K562 (cell line): ENCODE measurements at regions of chr12 and their contacts with region 1.

Region 1: DNA sequence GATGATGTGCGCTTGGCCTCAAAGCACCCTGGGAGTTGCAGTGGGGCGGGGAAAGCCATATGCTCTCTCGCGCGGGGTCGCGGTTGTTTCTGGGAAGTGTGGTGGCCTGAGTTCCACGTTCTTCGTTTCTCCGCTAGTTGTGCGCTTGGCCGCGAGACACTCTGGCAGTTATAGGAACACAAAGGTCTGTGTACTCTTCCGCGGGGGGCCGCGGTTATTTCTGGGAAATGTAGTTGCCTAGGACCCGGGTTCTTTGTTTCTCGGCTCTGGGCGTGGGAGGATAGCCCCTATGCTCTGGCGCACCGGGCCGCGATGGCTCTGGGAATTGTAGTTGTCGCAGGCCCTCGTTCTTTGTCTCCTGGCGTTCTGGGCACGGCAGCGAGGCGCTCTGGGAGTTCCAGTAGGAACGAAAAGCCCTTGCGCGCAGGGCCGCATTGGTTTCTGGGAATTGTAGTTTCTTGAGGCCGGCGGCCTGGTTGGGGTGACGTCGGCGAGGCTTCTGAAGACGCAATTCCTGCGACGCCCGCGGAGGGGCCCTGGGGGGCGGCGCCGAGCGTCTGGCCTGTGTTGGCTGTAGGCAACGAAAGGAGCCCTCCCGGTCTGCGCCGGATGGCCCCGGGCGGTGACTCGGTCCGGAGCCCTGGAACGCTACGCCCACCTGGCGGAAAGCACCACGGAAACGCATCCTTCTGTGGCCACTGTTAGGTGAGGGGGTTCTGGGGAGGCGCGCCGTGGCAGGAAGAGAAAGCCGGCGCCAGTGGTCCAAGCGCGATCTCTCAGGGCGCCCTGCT is at the start of gene ZNF140:
- DNase-seq: peak; percentile 86 to 96 (median 86)
- ATAC-seq: peak; percentile 90
- H3K4me3 ChIP-seq: peak within 1 kb of the TSS; percentile 91
- H3K27ac ChIP-seq: peak within 1 kb of the TSS; percentile 99
- H3K4me1 ChIP-seq: peaks cover 5 to 10% of the 10 kb centered on the region in 2 experiments; a peak in 3 of 5 replicates
- H3K27me3 ChIP-seq: no peaks in the 10 kb centered on the region
- CTCF ChIP-seq: peak in 2 of 3 experiments; percentile 20 to 39; a peak in 5 of 6 replicates
- EP300 ChIP-seq: no peak; the same call in 1 of the 2 replicates
- POLR2A ChIP-seq: peak; percentile 81
- RAD21 ChIP-seq: peak; percentile 14 to 18; a peak in 2 of 4 replicates
- polyA plus RNA-seq, gene ZNF140: 1.6 to 3.4 TPM

Region 2: DNA sequence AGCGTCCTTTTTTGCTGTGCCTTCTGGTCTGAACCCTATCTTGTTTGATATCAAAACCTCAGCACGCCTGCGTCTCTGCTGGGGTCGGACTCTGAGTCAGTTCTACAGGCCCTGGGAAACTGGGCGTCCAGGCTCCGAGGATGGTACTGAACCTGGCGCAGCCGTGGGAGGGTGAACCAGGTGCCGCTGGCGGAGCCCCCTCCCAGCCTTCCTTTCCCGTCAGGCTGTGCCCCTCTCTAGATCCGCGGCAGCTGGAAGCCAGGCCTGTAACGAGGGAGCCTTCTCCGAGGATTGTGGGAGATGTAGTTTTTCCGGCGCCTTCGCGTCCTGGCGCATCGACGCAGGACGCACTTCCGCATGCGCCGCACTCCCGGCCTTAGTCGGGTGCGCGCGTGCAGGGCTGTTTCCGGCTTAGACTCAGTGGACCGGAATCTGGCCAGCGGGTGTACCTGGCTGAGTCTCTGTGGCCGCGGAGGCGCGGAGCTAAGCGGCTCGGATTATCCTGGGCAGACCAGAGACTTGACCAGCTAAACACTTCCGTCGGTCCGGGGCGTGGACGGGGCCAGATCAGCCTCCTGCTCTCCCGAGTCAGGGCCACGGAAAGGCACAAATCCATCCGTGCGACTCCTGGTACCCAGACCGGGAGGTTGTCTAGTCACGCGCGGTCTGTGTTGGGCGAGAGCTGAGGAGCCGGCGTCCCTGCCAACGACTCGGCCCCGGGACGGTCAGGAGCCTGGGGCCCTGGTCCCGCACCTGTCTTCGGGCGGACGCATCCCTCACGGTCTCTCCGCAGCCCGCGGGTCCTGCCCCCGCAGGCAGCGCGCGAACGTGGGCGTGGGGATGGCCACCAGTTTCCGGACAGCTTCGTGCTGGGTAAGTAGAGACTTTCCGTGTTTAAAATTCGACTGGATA is 94.3 kb before region 1 on chr12 and contains the start of gene ZNF26:
- CTCF ChIA-PET with region 1: no interaction called
- POLR2A ChIA-PET with region 1: interaction called, 4 read pairs
- in situ Hi-C with region 1: no loop called
- intact Hi-C with region 1: loop called (anchors 1 kb)
- DNase-seq: peak; percentile 87 to 96 (median 89)
- ATAC-seq: peak; percentile 99
- H3K4me3 ChIP-seq: peak within 1 kb of the TSS; percentile 85
- H3K27ac ChIP-seq: peak within 1 kb of the TSS; percentile 60
- H3K4me1 ChIP-seq: peaks cover 4 to 13% of the 10 kb centered on the region in 2 experiments; a peak in 3 of 5 replicates
- H3K27me3 ChIP-seq: no peaks in the 10 kb centered on the region
- CTCF ChIP-seq: no peak
- EP300 ChIP-seq: no peak
- POLR2A ChIP-seq: peak; percentile 84
- RAD21 ChIP-seq: no peak
- polyA plus RNA-seq, gene ZNF26: 1.2 to 1.4 TPM

Region 3: GRCh38 chr12:133037207-133038005 is 43.2 kb before region 1 on chr12 and contains the start of gene ZNF84:
- CTCF ChIA-PET with region 1: no interaction called
- POLR2A ChIA-PET with region 1: no interaction called
- in situ Hi-C with region 1: no loop called
- intact Hi-C with region 1: loop called (anchors 1 kb)
- DNase-seq: peak; percentile 90 to 97 (median 92)
- ATAC-seq: peak; percentile 96
- H3K4me3 ChIP-seq: peak within 1 kb of the TSS; percentile 74
- H3K27ac ChIP-seq: peak within 1 kb of the TSS; percentile 98
- H3K4me1 ChIP-seq: peaks cover 3 to 10% of the 10 kb centered on the region in 2 experiments; a peak in 1 of 5 replicates
- H3K27me3 ChIP-seq: no peaks in the 10 kb centered on the region
- CTCF ChIP-seq: no peak
- EP300 ChIP-seq: peak; percentile 8; the same call in 1 of the 2 replicates
- POLR2A ChIP-seq: peak; percentile 75
- RAD21 ChIP-seq: no peak
- polyA plus RNA-seq, gene ZNF84: 8.8 to 12.1 TPM

Region 4: DNA sequence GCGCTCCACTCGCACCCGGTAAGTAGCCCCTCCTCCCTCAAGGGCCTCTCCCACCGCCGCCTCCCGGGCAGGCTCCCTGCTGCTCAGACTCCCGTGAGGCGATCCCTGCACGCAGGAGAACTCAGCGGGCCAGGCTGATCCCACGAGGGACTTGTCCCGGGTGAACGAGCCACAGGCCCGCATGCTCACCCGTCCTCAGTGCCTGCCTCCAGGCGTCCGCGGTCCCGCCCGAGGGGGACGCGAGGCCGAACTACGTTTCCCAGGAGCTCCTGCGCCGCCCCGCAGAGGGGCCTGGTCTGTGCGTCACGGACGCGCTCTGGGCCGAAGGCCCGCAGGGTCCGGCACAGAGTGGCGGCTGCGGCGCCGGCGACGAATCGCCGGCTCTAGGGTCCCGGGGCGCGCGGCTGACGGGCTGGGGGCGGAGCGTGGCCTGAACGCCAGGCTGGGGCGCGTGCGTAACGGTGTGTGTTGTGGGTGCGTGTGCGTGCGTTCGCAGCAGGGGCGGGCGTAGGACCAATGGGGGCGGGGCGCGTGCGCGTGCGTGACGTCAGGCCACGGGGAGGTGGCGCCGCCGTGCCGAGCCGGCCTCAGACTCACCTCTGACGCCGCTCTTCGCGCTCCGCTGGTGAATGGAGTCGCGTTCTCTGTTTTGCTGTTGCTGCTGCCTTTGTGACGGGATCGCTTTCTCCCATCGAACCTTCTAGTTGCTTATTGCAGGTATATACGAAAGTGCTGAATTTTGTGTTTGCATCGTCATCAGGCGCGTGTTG is 49.7 kb after region 1 on chr12 and contains the starts of genes ZNF10 and ZNF891:
- CTCF ChIA-PET with region 1: no interaction called
- POLR2A ChIA-PET with region 1: interaction called, 4 read pairs
- in situ Hi-C with region 1: no loop called
- intact Hi-C with region 1: loop called (anchors 1 kb)
- DNase-seq: peak; percentile 92 to 96 (median 93)
- ATAC-seq: peak; percentile 99
- H3K4me3 ChIP-seq: peak within 1 kb of the TSS; percentile 85
- H3K27ac ChIP-seq: peak within 1 kb of the TSS; percentile 95
- H3K4me1 ChIP-seq: no peaks in the 10 kb centered on the region; a peak in 1 of 5 replicates
- H3K27me3 ChIP-seq: no peaks in the 10 kb centered on the region
- CTCF ChIP-seq: 0 out of 6 replicates have a peak, but pooled peaks of 1 of the 3 experiments have one; percentile 0
- EP300 ChIP-seq: no peak
- POLR2A ChIP-seq: peak; percentile 91
- RAD21 ChIP-seq: 0 out of 4 replicates have a peak, but pooled peaks of 1 of the 2 experiments have one; percentile 8
- polyA plus RNA-seq, gene ZNF10: 4.8 to 5.2 TPM
- polyA plus RNA-seq, gene ZNF891: 0.41 to 0.53 TPM

Region 5: GRCh38 chr12:133181238-133181959 is 100.8 kb after region 1 on chr12 and contains the start of gene ZNF268:
- CTCF ChIA-PET with region 1: interaction called, 3 read pairs
- POLR2A ChIA-PET with region 1: interaction called, 5 read pairs
- in situ Hi-C with region 1: no loop called
- intact Hi-C with region 1: loop called (anchors 1 kb)
- DNase-seq: peak; percentile 95 to 96 (median 96)
- ATAC-seq: peak; percentile 99
- H3K4me3 ChIP-seq: peak within 1 kb of the TSS; percentile 88
- H3K27ac ChIP-seq: peak within 1 kb of the TSS; percentile 78
- H3K4me1 ChIP-seq: no peaks in the 10 kb centered on the region
- H3K27me3 ChIP-seq: no peaks in the 10 kb centered on the region
- CTCF ChIP-seq: peak; percentile 84 to 95 (median 93)
- EP300 ChIP-seq: peak; percentile 54
- POLR2A ChIP-seq: peak; percentile 84
- RAD21 ChIP-seq: peak; percentile 60 to 62
- polyA plus RNA-seq, gene ZNF268: 6.5 to 7.7 TPM